Activated T-helper 2 cell treated with anti-CD3 and anti-CD28 coated beads, Interferon-gamma antibody, Interleukin-2, Interleukin-4, amounts not matched to agents 10 μg/mL and 5 μg/mL and 100 μg/mL, durations not matched to agents 14 hours and 24 hours and 36 hours (primary cell): ENCODE measurements at regions of chr1 and their contacts with region 1.

Region 1: GRCh38 chr1:73789965-73790364 is 408.0 kb downstream of the LRRIQ3 start:
- DNase-seq: no peak
- H3K4me3 Mint-ChIP-seq: no peak overlapping the region
- H3K27ac Mint-ChIP-seq: no peak overlapping the region
- H3K4me1 Mint-ChIP-seq: no peaks in the 10 kb centered on the region
- H3K27me3 Mint-ChIP-seq: no peaks in the 10 kb centered on the region

Region 2: GRCh38 chr1:73576083-73576482 is 213.9 kb before region 1 on chr1:
- intact Hi-C with region 1: no loop called
- DNase-seq: no peak
- H3K4me3 Mint-ChIP-seq: no peak overlapping the region
- H3K27ac Mint-ChIP-seq: no peak overlapping the region
- H3K4me1 Mint-ChIP-seq: no peaks in the 10 kb centered on the region
- H3K27me3 Mint-ChIP-seq: no peaks in the 10 kb centered on the region

Region 3: GRCh38 chr1:73674945-73675561 is 114.9 kb before region 1 on chr1:
- intact Hi-C with region 1: no loop called
- DNase-seq: no peak
- H3K4me3 Mint-ChIP-seq: no peak overlapping the region
- H3K27ac Mint-ChIP-seq: no peak overlapping the region
- H3K4me1 Mint-ChIP-seq: no peaks in the 10 kb centered on the region
- H3K27me3 Mint-ChIP-seq: no peaks in the 10 kb centered on the region

Region 4: DNA sequence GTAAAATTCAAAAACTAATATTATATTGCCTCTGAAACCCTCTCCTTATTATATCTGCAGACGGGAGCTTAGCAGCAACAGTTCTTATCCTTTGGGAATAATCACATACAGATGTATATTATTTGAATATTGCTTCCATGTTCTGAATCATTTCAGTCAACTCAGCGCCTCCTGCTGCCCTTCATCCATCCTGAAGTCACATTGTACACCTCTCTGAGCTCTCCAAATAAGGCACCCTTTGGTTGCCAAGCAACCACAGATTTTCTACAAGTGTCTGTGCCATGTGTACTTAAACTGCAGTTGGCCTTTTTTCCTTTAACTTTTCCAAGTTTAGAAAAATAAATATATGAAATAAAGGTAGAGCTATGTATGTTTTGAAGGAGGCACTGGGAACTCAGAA is 23.8 kb after region 1 on chr1:
- intact Hi-C with region 1: loop called (anchors 1 kb)
- DNase-seq: no peak
- H3K4me3 Mint-ChIP-seq: no peak overlapping the region
- H3K27ac Mint-ChIP-seq: no peak overlapping the region
- H3K4me1 Mint-ChIP-seq: no peaks in the 10 kb centered on the region
- H3K27me3 Mint-ChIP-seq: no peaks in the 10 kb centered on the region